ENCODE measurements at regions of chr15 and their contacts with region 1.

Region 1: DNA sequence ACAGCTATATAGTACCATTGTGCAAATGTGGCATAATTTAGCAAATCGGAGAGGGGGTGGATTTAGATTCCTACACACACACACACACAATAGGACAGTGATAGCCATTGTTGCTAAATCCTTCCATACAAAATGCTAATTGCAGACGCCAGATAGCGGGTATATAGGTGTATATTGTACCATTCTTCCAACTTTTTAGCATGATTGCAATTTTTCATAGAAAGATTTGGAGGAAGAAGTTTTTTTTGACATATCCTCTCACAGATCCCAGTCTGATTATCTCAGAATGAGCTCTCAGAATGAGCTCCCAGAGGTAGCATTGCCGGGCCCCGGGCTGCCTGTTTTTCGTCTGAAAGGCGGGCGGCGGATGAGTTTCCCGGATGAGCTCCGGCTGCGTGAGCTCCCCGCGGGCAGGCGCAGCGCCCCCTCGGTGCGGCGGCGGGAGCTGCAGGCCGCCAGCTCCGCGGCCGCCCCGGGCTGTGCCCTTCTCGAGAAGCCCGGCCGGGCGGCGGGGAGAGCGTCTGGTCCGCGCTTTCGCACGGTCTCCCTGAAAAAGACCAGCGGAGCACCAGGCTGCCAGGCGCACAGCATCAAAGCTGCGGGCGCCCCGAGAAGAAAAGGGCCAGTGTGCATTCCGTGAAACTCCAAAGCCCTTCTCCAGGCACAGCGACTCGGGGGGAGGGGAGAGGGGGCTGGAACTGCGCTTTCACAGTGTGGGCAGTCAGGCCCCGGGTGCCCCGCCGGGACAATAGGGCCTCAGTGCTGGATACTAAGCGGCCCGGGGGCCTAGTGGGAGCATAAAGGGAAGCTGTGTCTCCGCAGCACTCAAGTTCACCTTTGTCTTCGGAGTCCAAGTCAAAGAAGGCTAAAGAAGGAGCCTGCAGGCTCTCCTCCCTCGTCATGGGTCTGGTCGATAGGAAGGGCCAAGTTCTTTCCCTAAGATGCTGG is 12.0 kb upstream of the SHC4 start:
- DNase-seq: peak; percentile 88
- CTCF ChIP-seq: peak; percentile 86

Region 2: GRCh38 chr15:48682949-48683651 is 292.6 kb before region 1 on chr15:
- CTCF ChIA-PET with region 1: no interaction called
- POLR2A ChIA-PET with region 1: no interaction called
- DNase-seq: no peak
- CTCF ChIP-seq: no peak

Region 3: DNA sequence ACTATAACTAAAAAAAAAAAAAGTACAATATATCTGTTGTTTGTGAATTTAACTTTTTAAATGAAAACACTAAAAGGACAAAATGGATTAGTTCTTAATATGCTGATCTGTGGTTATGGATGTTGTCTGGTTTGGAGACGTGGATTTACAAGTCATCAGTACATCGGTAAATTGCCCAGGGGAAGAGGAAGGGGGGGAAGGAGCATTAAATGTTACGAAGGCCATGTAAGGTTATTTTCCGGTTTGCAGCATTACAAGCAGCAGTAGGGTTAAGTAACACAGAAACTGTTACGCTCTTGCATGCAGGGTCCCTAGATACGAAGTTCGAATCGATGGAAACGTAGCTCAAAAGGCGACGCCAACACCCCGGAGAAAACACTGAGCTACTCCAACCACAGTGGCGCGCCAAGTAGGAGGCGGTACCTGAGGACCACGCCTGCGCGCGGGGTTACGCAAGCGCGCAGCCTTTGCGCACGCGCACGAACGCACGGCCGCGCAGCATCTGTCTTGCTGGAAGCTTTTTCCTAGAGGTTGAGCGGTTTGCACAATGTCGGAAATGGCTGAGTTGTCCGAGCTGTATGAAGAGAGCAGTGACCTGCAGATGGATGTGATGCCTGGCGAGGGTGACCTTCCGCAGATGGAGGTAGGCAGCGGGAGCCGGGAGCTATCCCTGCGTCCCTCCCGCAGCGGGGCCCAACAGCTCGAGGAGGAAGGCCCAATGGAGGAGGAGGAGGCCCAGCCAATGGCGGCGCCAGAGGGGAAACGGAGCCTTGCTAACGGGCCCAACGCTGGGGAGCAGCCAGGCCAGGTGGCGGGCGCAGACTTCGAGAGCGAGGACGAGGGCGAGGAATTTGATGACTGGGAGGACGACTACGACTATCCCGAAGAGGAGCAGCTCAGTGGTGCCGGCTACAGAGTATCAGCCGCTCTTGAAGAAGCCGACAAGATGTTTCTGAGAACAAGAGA is 97.8 kb before region 1 on chr15 and contains the start of gene EID1:
- CTCF ChIA-PET with region 1: interaction called, 10 read pairs
- POLR2A ChIA-PET with region 1: no interaction called
- DNase-seq: peak; percentile 90
- CTCF ChIP-seq: no peak

Region 4: DNA sequence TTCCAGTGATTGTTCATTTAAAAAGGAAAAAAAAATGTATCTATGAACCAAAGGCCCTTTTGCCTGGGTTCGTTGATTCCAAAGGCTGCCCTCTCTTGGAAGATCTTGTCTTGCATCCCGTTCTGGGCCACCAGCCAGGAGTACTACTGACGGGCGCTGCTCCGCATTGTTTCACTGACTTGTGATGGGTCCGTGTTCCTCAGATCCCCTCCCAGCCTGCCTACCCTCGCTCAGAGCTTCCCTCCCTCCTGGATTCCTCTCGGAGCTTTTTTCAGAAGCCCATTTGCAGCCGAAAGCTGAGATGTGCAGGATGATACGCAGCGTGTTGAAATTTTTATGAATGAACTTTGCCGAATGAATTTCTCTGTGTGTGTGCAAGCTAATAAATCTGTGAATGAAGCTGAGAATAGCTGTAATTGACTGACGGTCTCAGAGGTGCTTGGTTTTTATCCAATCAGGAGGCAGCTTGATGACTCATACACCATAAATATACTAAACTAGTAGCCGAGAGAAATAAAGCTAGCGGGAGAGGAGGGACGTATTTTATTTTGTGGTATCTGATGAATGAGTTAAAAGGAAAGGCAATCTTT is 12.1 kb before region 1 on chr15 and contains the start of gene SHC4:
- CTCF ChIA-PET with region 1: interaction called, 38 read pairs
- POLR2A ChIA-PET with region 1: no interaction called
- DNase-seq: peak; percentile 60
- CTCF ChIP-seq: no peak

Region 5: DNA sequence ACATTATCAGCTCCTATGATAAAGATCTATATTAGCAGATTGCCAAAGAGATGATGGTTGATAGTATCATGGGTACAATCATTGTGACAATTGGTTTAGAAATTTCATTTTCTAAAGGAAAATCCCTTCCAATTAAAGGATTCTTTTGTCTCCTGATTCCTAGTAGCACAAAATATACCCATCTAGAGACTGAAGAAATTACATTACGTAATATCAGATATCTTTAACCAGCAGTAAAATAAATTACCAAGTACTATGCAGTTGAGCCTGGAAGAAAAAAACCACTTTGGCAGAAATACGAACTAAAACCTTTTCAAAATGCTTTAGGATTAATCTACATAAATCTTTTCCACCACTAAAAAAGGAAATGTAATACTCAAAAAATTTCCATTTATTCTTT is 23.6 kb after region 1 on chr15:
- CTCF ChIA-PET with region 1: interaction called, 48 read pairs
- POLR2A ChIA-PET with region 1: no interaction called
- DNase-seq: no peak
- CTCF ChIP-seq: no peak

Region 6: GRCh38 chr15:49490966-49491365 is 515.2 kb after region 1 on chr15:
- CTCF ChIA-PET with region 1: no interaction called
- POLR2A ChIA-PET with region 1: no interaction called
- DNase-seq: no peak
- CTCF ChIP-seq: no peak

Measured in GM10248 (cell line).